Right ventricle myocardium superior (tissue), 1 donor: ENCODE measurements at regions of chr7 and their contacts with region 1.

Region 1: DNA sequence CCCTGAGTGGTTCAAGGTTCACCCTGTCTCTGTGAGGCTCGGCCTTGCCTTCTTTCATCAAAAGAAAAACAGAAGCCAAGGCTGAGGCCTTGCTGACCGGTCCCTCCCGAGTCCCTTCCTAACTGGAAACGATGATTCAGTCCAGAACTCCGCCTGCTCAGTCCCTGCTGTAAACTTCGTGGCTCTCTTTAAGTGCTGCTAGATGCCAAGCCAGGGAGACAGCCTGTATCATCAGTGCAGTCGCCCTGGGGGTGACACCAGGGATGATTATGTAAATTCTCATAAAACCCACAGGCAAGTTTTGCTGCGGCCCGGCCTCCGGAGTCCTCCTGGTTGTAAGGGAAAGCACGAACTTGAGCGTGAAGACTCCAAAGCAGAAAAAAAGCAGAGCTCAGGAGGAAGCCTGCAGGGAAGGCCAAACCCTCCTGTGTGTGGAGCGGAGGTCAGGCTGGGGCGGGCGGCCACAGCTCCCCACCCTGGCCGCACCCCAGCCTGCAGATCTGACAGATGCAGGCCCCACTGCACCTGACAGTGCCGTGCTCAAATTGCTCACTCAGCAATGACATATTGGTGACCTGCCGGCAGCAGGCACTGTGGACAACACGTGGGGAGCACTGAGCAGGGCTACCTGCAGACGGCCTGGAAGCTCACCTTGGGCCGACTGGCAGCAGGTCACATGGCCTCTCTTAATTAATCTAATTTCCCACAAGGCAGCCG is 123.4 kb downstream of the DYNC2I1 start:
- DNase-seq: no peak
- ATAC-seq: no peak

Region 2: DNA sequence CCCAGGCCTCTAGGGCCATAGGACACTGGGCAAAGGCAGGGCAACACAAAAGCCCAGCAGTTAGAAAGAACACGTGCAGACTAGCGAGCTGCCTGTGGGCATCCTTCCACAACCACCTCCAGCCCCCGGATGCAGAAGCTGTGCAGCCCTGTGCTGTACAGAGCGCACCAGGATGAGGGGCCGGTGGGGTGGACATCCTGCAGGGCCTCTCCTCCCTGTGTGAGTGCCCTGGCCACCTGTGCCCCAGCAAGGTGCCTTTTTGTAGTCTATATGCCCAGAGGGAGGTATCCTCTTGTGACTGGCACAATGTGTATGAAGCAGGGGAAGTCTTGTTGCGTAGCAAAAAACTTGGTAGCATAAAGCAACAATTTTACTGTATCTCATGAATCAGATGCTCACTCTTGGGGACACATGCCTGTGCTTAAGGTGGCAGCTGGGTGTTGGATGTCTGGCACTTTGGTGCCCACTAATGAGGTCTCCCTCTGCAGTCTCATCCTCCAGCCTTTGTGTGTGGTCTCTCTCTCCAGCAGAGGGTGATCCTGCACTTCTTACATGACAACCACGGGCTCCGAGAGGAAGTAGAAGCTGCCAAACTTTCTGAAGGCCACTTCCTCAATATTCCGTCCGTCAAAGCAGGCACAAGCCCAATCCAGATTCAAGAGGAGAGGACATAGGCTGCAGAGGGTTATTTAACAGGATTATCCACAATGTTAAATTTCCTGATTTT is 283.9 kb before region 1 on chr7:
- intact Hi-C with region 1: loop called (anchors 2 kb)
- DNase-seq: peak; percentile 47
- ATAC-seq: peak; percentile 97

Region 3: GRCh38 chr7:159117366-159118196 is 137.8 kb after region 1 on chr7:
- intact Hi-C with region 1: no loop called
- DNase-seq: peak; percentile 26
- ATAC-seq: no peak